Activated T-helper 2 cell treated with anti-CD3 and anti-CD28 coated beads, Interferon-gamma antibody, Interleukin-2, Interleukin-4, amounts not matched to agents 10 μg/mL and 5 μg/mL and 100 μg/mL, durations not matched to agents 14 hours and 24 hours and 36 hours (primary cell): ENCODE measurements at regions of chr19 and their contacts with region 1.

Region 1: DNA sequence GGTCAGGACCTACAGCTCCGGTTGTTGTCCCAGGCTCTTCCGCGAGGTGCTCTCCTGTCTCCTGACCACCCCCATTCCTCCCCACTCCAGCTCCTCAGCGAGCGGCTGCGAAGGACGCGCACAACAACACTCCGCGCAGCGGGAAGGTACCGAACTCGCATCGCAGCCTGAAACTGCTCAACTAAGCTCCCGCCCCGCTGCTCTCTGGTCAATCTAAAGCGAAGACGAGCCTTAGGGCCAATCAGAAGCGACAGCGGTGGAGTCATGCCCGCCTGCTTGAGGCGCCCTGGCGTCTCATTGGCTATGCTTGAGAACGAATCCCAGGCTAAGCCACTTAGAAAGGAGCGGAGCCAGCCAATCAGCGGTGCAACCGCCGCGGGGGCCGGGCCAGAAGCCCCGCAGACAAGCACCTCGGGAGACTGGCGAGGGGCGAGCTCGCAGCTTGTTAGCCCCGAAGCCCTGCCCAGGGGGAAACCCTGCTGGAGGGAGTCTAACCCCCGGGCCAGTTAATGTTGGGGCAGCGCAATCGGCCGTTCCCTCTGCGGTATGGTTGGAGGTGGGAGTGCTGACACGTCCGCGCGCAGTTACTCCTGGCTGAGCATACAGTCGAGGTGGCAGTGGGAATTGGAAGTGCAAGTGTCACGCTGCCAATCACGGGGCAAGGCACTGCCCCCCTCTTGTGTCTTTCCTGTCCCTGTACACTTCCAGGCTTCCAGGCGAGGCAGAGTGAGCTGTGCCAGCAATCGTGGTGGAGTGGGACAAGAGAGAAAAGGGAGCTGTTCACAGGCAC is 1.9 kb upstream of the ZBTB32 start:
- DNase-seq: peak; percentile 93
- H3K4me3 Mint-ChIP-seq: peak overlapping the region; percentile 91
- H3K27ac Mint-ChIP-seq: peak overlapping the region; percentile 91
- H3K4me1 Mint-ChIP-seq: peaks cover 11% of the 10 kb centered on the region
- H3K27me3 Mint-ChIP-seq: no peaks in the 10 kb centered on the region

Region 2: GRCh38 chr19:35738021-35738886 is 35.8 kb after region 1 on chr19:
- intact Hi-C with region 1: no loop called
- DNase-seq: no peak
- H3K4me3 Mint-ChIP-seq: no peak overlapping the region
- H3K27ac Mint-ChIP-seq: no peak overlapping the region
- H3K4me1 Mint-ChIP-seq: peaks cover 18% of the 10 kb centered on the region
- H3K27me3 Mint-ChIP-seq: no peaks in the 10 kb centered on the region

Region 3: GRCh38 chr19:35748106-35749020 is 45.9 kb after region 1 on chr19 and contains the start of gene LIN37:
- intact Hi-C with region 1: loop called (anchors 1 kb)
- DNase-seq: peak; percentile 98
- H3K4me3 Mint-ChIP-seq: peak within 1 kb of the TSS; percentile 95
- H3K27ac Mint-ChIP-seq: peak within 1 kb of the TSS; percentile 90
- H3K4me1 Mint-ChIP-seq: peaks cover 31% of the 10 kb centered on the region
- H3K27me3 Mint-ChIP-seq: no peaks in the 10 kb centered on the region
- total RNA-seq, gene LIN37: 9.9 and 10.0 TPM in 2 replicates

Region 4: DNA sequence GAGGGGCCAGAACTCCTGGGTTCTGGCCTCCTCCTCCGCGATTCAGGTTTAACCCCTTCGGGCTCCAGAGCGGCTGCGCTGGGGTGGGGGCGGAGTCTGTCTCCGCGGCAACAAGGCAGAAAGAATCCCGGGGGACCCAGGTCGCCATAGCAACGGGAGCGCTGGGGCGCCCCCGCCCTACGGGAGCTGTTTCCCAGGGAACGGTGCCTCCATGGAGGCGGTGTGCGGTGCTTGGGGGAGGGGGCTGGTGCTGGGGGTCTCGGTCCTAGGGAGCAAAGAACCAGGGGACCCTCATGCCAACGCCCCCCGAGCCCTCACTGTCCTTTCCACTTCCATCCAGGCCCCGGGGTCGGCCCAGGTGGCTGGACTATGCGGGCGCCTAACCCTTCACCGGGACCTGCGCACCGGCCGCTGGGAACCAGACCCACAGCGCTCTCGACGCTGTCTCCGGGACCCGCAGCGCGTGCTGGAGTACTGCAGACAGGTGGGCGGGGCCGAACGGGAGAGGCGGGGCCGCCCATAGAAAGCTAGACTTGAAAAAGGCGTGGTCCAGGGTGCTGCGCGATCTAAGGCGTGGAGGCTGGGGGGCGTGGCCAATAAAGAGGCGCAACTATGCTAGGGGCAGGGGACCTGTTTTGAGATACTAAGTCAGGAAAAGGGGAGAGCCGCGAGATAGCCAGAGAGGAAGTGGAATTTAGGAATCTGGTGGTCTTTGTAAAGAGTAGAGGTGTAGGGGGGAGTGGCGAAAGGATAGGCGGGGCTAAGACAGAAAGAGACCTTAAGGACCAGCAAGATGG is 167.1 kb after region 1 on chr19:
- intact Hi-C with region 1: no loop called
- DNase-seq: peak; percentile 85
- H3K4me3 Mint-ChIP-seq: peak overlapping the region; percentile 76
- H3K27ac Mint-ChIP-seq: no peak overlapping the region
- H3K4me1 Mint-ChIP-seq: peaks cover 13% of the 10 kb centered on the region
- H3K27me3 Mint-ChIP-seq: peaks cover 27% of the 10 kb centered on the region